ENCODE measurements at regions of chr17 and their contacts with region 1.

Region 1: GRCh38 chr17:75827252-75828115 is 16.7 kb downstream of the UNC13D start:
- DNase-seq: no peak
- H3K4me3 ChIP-seq: no peak overlapping the region
- H3K27me3 ChIP-seq: no peaks in the 10 kb centered on the region
- CTCF ChIP-seq: peak; percentile 79

Region 2: DNA sequence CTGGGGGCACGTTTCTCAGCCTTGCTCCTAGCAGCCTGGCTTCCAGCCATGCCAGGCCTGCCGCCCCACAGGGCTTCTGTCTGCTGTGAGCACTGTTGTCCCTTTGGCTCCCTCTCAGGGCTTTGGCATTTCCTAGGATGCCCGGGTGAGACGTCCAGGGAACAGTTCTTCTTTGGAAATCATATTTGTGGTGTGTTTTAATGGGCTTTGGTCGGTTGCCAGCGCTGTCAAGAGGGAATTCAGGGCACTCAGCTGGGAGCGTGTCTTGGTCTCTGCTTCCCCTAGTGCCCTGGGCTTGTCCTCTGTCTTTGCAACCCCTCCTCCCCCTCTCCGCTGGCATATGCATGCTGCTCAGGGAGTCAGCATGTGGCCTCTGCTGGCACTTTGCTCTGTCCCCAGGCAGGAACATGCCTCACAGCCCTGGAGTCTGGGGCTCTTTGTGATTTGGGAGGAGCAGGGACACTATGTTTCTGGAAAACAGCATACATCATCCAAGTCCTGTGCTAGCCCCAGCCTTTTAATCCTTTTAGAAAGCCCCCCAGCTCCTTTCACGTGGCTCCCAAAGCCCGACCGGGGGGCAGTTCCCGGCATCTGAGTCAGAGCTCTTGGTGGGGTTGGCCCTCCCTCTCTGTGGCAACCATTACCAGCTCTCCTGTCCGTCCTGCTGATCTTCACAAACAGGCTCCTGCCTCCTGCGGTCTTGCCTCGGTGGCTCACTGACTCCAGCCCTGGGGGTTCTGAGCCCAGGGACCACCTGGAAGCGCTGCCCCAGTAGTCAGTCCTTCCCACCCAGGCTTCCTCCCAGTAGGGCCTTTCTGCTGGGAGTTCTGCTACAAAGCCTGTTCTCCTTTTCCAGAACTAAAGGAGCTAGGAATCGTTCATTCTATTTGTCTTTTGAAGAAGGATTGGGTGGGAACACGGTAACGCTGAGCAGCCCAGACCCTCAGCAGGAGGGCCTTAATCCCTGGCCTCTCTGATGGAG is 133.7 kb before region 1 on chr17:
- CTCF ChIA-PET with region 1: no interaction called
- POLR2A ChIA-PET with region 1: no interaction called
- DNase-seq: peak; percentile 93
- H3K4me3 ChIP-seq: no peak overlapping the region
- H3K27me3 ChIP-seq: no peaks in the 10 kb centered on the region
- CTCF ChIP-seq: peak; percentile 47

Region 3: DNA sequence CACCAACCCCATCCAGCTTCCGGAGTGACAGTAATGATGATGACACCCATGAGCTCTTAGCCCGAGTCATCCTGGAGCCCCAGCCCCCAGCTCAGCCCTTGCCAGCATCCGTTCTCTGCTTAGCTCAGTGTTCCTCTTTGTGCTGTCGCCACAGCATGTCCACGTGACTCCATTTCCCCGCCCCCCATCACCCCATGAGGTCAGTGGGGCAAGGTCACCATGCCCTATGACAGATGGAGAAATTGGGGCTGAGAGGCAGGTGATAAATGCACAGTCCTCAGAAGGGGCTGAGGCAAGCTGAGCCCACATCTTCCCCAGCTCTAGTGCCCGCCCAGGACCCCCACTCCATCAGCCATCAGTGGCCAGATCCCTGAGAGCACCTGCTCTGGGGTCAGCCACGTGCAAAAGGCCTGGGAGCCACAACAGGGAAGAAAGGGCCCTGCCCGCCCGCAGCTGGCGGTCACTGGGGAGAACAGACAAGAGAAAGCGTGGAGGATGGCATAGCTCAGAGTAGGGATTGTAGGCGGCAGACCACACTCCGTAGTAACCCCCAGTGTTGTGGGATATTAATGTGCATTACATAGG is 89.2 kb before region 1 on chr17:
- CTCF ChIA-PET with region 1: no interaction called
- POLR2A ChIA-PET with region 1: no interaction called
- DNase-seq: no peak
- H3K4me3 ChIP-seq: no peak overlapping the region
- H3K27me3 ChIP-seq: no peaks in the 10 kb centered on the region
- CTCF ChIP-seq: no peak

Region 4: GRCh38 chr17:75764711-75765421 is 62.6 kb before region 1 on chr17 and contains the start of gene GALK1:
- CTCF ChIA-PET with region 1: interaction called, 11 read pairs
- POLR2A ChIA-PET with region 1: no interaction called
- DNase-seq: no peak
- H3K4me3 ChIP-seq: peak within 1 kb of the TSS; percentile 78
- H3K27me3 ChIP-seq: no peaks in the 10 kb centered on the region
- CTCF ChIP-seq: peak; percentile 71
- polyA plus RNA-seq, gene GALK1: 19.9 and 35.8 TPM in 2 replicates

Region 5: DNA sequence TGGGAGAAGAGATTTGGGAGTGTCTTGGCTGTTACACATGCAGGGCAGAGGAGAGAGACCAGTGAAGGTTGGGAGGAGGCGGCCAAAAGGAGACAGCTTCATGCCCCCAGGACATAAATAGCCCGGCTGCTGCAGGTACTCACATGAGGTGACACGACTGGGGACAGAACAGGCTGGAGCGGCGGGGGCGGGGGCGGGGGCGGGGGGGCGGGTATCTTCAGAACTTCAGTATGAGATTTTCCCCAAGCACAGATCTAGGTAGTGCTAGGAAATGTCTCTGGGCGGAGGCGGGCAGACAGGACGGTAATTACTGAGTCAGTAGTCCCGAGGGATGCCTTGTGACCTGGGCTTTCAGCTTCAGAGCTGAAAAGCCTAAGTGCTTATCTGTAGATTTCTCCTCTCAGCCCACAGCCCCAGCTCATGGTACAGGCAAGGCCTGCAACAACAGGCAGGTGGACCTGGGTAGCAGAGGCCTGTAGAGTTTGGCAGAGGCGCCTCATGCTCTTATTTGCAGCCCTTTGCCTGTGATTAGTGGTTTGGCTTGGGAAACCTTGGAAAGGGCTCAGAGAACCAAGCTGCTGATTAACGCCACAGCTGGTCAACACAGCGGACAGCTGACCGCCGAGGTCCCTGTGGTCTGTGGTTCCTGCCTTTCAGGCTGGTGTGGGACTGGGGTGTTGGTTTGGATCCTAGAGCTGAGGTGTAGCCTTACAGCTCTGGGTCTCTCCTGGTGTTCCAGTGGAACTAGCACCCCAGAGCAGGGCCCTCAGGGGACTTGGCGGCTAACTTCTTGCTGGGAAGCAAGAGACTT is 18.4 kb before region 1 on chr17:
- CTCF ChIA-PET with region 1: interaction called, 56 read pairs
- POLR2A ChIA-PET with region 1: no interaction called
- DNase-seq: no peak
- H3K4me3 ChIP-seq: no peak overlapping the region
- H3K27me3 ChIP-seq: no peaks in the 10 kb centered on the region
- CTCF ChIP-seq: no peak

Region 6: DNA sequence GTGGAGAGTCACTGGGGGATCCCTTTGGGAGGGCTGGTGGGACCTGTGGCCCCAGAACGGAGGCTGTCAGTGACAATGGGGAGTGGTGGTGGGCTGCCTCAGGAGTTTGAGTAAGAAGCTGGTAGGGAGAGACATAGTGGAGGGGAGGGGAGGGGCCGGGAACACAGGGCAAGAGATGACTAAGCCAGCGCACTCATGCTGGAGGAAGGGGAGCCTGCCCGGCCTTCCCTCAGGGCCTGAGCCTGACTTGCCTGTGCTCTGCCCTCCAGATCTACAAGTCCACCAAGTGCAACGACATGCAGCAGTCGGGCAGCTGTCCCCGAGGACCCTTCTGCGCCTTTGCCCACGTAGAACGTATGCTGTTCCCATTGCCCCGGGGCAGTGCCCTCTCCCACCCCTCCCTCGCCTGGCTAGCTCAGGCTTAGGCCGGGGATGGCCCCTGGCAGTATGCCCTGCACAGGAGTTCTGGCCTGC is 12.5 kb before region 1 on chr17:
- CTCF ChIA-PET with region 1: interaction called, 56 read pairs
- POLR2A ChIA-PET with region 1: no interaction called
- DNase-seq: peak; percentile 26
- H3K4me3 ChIP-seq: no peak overlapping the region
- H3K27me3 ChIP-seq: no peaks in the 10 kb centered on the region
- CTCF ChIP-seq: no peak